Heart left ventricle (tissue), 16 donors: ENCODE measurements at regions of chr12 and their contacts with region 1.

Region 1: GRCh38 chr12:93514853-93515252 is 47.5 kb downstream of the MRPL42 start:
- DNase-seq: no peak
- ATAC-seq: no peak
- H3K4me3 ChIP-seq: no peak overlapping the region
- H3K27ac ChIP-seq: no peak overlapping the region
- H3K4me1 ChIP-seq: peaks cover 0 to 7% (median 0%) of the 10 kb centered on the region in 12 donors
- H3K27me3 ChIP-seq: no peaks in the 10 kb centered on the region
- CTCF ChIP-seq: no peak
- POLR2A ChIP-seq: no peak

Region 2: DNA sequence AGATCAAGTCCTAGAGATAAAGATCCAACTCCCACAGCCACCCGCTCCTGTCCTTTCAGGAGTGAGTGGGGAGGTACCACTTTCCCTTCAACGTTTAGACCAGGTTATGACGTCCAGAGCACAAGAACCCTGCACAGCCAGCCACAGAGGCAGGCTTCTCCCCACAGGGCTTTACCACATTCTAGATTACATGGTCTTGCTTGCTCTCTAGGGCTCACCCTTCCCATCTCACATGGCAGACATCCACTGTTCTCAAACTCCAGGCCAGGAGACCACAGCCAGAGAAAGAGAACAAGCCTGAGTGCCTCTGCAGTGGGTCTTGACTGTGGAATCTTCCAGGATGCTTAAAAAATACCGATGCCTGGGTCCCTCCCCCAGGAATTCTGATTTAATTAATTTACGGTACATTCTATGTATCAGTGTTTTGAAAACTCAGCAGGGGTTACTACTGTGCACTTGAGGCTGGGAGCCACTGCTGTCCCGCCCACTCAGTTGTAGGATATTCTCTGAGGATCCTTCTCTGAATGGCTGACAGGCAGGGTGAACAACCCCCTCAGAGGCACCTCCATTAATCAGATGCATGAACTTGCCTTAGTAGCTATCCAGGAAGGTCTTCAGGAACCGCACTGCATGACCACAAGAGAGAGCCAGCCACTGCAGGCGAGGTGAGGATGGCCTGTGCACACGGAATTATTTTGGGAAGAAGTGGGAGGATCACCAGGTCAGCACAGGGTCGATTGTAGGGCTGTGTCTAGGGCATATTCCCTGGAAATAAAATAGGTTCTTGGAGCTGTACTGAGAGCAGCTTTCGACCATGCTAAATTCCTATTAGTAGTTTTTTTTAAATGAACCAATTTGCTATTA is 36.1 kb after region 1 on chr12:
- intact Hi-C with region 1: loop called in 1 of 10 experiments (anchors 5 kb)
- DNase-seq: no peak
- ATAC-seq: no peak
- H3K4me3 ChIP-seq: no peak overlapping the region
- H3K27ac ChIP-seq: no peak overlapping the region
- H3K4me1 ChIP-seq: no peaks in the 10 kb centered on the region
- H3K27me3 ChIP-seq: no peaks in the 10 kb centered on the region
- CTCF ChIP-seq: peak in 1 of 12 donors; percentile 9
- POLR2A ChIP-seq: no peak

Region 3: GRCh38 chr12:93707836-93708235 is 193.0 kb after region 1 on chr12:
- intact Hi-C with region 1: no loop called
- DNase-seq: no peak
- ATAC-seq: no peak
- H3K4me3 ChIP-seq: no peak overlapping the region
- H3K27ac ChIP-seq: peak overlapping the region in 2 of 12 donors; percentile 8 to 21
- H3K4me1 ChIP-seq: peaks cover 0 to 62% (median 26%) of the 10 kb centered on the region in 12 donors
- H3K27me3 ChIP-seq: no peaks in the 10 kb centered on the region
- CTCF ChIP-seq: no peak
- POLR2A ChIP-seq: no peak

Region 4: GRCh38 chr12:93785262-93786010 is 270.6 kb after region 1 on chr12:
- intact Hi-C with region 1: no loop called
- DNase-seq: peak in 4 of 5 donors; percentile 40 to 78 (median 52)
- ATAC-seq: peak; percentile 77 to 96 (median 94)
- H3K4me3 ChIP-seq: no peak overlapping the region
- H3K27ac ChIP-seq: peak overlapping the region; percentile 69 to 96 (median 84)
- H3K4me1 ChIP-seq: peaks cover 2 to 50% (median 39%) of the 10 kb centered on the region in 12 donors
- H3K27me3 ChIP-seq: no peaks in the 10 kb centered on the region
- CTCF ChIP-seq: no peak
- POLR2A ChIP-seq: no peak